ENCODE measurements at regions of chr7 and their contacts with region 1.

Region 1: GRCh38 chr7:80346704-80347103 is 165.2 kb downstream of the GNAT3 start:
- DNase-seq: peak in 1 of 2 experiments; percentile 10
- ATAC-seq: peak in 1 of 2 experiments; percentile 64; a peak in 3 of 6 replicates
- H3K4me3 ChIP-seq: no peak overlapping the region
- H3K27ac ChIP-seq: no peak overlapping the region
- H3K4me1 ChIP-seq: peaks cover 8% of the 10 kb centered on the region; the same call in 2 of the 3 replicates
- CTCF ChIP-seq: no peak
- EP300 ChIP-seq: no peak
- POLR2A ChIP-seq: no peak
- RAD21 ChIP-seq: no peak

Region 2: DNA sequence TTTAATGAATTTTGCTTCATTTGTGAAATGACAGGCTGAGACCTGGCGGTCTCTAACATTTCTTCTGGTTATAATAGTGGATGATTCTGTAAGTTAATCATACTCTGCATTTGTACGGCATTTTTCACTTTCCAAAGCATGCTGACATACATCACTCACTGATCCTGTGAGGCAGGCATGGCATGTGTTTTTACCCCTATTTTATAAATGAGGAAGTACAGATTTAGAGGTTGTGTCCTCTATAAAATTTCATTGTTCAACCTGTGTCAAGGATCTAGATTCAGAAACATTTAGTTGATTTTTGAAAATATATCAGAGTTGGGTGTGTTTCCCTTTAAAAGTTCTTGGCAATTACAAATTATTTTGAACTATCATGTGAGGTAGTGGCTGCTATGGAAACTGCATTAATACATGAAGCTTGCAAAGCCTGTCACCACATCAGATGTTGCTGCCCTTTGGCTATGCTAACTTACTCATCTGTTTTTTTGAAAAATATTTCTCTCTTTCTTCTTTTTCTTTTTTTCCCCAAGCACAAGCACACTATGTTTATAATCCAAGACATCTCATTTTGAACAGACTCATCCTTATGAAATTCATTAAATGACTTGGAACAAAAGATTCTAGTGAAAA is 39.4 kb before region 1 on chr7:
- CTCF ChIA-PET with region 1: no interaction called
- POLR2A ChIA-PET with region 1: no interaction called
- DNase-seq: peak in 1 of 2 experiments; percentile 36
- ATAC-seq: peak in 1 of 2 experiments; percentile 52; a peak in 2 of 6 replicates
- H3K4me3 ChIP-seq: no peak overlapping the region
- H3K27ac ChIP-seq: no peak overlapping the region
- H3K4me1 ChIP-seq: peaks cover 10% of the 10 kb centered on the region
- CTCF ChIP-seq: no peak
- EP300 ChIP-seq: no peak
- POLR2A ChIP-seq: no peak
- RAD21 ChIP-seq: no peak

Region 3: DNA sequence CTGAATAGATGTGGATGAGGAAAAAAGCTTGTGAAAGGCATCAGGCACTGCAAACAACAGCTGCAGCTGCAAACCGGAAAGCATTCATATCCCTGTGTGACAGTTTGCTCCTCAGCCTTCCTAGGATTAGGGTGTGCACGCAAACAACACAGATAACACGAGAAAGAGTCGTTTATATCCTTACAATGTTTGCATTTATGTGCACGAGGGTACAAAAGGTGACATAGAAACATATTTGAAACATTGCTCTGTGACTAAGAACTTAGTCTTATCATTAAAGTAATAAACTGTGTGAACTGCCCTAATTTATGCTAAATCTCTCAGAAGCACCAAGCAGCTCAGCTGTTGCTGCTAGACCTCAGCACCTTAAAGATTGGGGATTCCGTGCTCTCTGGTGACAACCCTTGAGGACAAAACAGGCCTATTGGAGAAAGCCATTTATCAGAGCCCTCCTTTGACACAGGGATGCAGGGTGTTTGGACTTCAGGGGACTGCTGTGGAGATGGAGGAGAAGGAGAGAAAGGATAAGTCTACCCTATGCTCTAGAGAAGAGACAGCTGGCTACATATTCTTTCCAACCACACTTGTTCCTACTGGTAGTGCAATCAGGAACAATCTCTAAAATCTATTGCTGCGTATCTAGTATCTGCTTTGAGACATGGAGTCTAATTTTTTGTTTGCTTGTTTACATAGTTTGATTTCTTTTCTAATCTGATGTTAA is 11.0 kb before region 1 on chr7:
- CTCF ChIA-PET with region 1: interaction called, 12 read pairs
- POLR2A ChIA-PET with region 1: no interaction called
- DNase-seq: no peak
- ATAC-seq: no peak; a peak in 1 of 6 replicates
- H3K4me3 ChIP-seq: no peak overlapping the region
- H3K27ac ChIP-seq: no peak overlapping the region
- H3K4me1 ChIP-seq: 0 out of 3 replicates have a peak, but pooled peaks cover 7% of the 10 kb centered on the region
- CTCF ChIP-seq: no peak
- EP300 ChIP-seq: no peak
- POLR2A ChIP-seq: no peak
- RAD21 ChIP-seq: no peak

Measured in A549 (cell line).